Posterior cingulate gyrus (tissue), 11 donors: ENCODE measurements at regions of chr15 and their contacts with region 1.

Region 1: GRCh38 chr15:98076021-98076816 is 115.7 kb downstream of the ARRDC4 start:
- DNase-seq: no peak

Region 2: GRCh38 chr15:97981758-97982157 is 94.5 kb before region 1 on chr15:
- intact Hi-C with region 1: loop called (anchors 2 kb)
- DNase-seq: no peak

Region 3: GRCh38 chr15:98025235-98025634 is 51.0 kb before region 1 on chr15:
- intact Hi-C with region 1: no loop called
- DNase-seq: no peak

Region 4: DNA sequence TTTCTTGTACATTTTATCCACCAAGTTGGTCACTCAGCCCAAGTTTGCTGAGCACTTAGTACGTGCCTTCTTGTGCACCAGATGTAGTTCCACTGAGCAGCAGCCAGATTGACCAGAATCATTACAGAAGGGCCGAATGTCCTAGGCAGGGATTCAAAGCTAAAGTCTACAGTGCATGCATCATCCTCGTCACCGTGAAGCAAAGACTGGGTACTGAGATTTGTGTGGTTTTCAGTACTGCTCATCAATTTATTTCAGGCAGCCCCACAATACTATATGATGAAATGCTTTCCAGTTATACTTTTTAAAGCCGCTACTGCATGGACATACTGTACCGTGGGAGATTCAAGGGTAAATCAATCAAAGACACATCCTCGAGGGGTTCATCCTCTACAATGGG is 111.3 kb after region 1 on chr15:
- intact Hi-C with region 1: no loop called
- DNase-seq: no peak